H1 (cell line): ENCODE measurements at regions of chr2 and their contacts with region 1.

Region 1: DNA sequence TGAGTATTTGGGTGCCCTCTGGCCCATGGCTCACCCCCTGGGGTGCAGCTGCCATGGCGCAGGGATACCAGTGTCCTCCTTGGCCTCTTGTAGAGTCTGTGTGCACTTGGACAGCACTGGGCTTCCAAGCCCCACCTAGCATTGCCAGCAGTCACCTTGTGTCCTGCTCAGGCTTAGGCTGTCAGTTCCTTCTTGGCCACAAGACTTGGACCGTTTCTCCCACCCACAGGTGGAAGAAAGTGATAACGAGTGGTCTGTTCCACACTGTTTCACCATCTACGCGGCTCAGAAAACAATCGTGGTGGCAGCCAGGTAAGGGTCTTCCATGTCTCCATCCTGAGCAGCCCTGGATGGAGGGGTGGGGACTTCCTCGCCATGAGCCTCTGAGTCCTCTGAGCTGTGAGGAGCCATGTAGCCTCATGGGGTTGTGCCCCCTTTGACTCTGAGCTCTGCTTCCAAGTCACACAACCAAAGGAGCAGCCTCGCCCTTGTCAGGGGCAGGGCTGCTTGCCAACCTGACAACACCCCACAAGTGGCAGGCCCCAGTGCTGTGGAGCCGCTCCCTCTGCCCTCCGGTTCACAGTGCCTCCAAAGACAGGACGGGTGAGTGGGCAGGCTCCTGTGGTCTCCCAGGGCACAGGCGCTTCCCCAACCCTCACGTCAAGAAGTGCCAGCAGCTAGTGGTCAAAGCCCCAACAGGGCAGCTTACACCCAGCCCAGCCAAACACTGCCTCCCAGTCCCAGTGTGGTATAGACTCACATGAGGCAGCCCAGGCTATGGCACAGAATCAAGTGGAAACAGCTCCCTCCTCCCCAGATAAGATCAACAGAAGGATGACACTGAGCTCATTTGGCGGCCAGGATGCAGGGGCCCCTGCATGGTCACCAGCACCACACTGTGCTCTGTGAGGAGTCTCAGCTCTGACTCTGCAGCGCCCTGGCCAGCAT is 18.4 kb downstream of the STK25 start:
- DNase-seq: peak in 1 of 2 experiments; percentile 45
- H3K4me3 ChIP-seq: no peak overlapping the region
- H3K27ac ChIP-seq: no peak overlapping the region
- H3K4me1 ChIP-seq: no peaks in the 10 kb centered on the region; a peak in 1 of 7 replicates
- H3K27me3 ChIP-seq: no peaks in the 10 kb centered on the region
- CTCF ChIP-seq: no peak
- EP300 ChIP-seq: no peak
- POLR2A ChIP-seq: no peak; a peak in 1 of 3 replicates
- RAD21 ChIP-seq: no peak

Region 2: GRCh38 chr2:241508240-241509154 is 18.5 kb after region 1 on chr2 and contains the start of gene STK25:
- CTCF ChIA-PET with region 1: interaction called, 3 read pairs
- POLR2A ChIA-PET with region 1: interaction called, 104 read pairs
- DNase-seq: peak; percentile 94 to 96
- H3K4me3 ChIP-seq: peak within 1 kb of the TSS; percentile 67 to 91 (median 78)
- H3K27ac ChIP-seq: no peak within 1 kb of the TSS
- H3K4me1 ChIP-seq: peaks cover 2 to 15% (median 11%) of the 10 kb centered on the region in 4 experiments
- H3K27me3 ChIP-seq: peaks cover 0 to 9% (median 5%) of the 10 kb centered on the region in 4 experiments; a peak in 4 of 7 replicates
- CTCF ChIP-seq: no peak
- EP300 ChIP-seq: no peak
- POLR2A ChIP-seq: peak in 1 of 2 experiments; percentile 66; a peak in 1 of 3 replicates
- RAD21 ChIP-seq: no peak
- total RNA-seq, gene STK25: 159 and 162 TPM in 2 replicates